Endothelial cell of umbilical vein (primary cell): ENCODE measurements at regions of chr7 and their contacts with region 1.

Region 1: DNA sequence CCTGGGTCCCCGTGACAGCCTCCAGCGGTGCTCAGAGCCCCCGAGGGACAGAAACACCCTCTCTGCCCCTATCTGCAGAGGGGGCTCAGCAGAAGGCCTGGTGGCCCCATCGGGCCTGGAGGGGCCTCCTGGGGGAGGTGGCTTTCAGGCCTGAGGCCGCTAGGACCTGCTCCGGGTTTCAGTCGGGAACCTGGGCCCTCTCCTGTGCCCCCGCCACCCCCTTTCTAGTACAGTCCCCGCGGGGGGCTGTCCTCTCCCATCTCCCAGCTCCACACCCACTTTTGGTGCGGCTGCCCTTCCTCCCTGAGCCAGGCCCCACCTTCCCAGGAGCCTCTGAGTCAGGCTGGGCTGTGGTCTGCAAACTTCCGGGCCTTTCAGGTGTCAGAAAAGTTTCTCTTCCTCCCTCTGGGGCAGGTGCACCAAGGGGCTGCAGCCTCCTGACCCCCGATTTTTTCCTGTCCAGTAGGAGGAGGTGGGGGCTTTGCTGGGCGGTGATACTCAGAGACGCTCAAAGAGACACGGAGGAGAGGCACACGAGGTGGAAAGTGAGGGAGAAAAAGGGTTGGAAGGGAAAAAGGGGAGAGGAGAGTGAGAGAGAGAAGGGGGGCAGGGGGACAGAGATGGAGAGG is 692 bp downstream of the CARD11 start:
- DNase-seq: no peak
- H3K4me3 ChIP-seq: peak overlapping the region; percentile 61 to 71 (median 63)
- H3K27ac ChIP-seq: no peak overlapping the region
- H3K4me1 ChIP-seq: peaks cover 3% of the 10 kb centered on the region
- H3K27me3 ChIP-seq: no peaks in the 10 kb centered on the region
- CTCF ChIP-seq: no peak
- POLR2A ChIP-seq: no peak

Region 2: GRCh38 chr7:2999078-2999500 is 43.9 kb before region 1 on chr7:
- CTCF ChIA-PET with region 1: no interaction called
- POLR2A ChIA-PET with region 1: no interaction called
- dilution Hi-C with region 1: no loop called
- intact Hi-C with region 1: loop called (anchors 1 kb)
- DNase-seq: peak; percentile 75
- H3K4me3 ChIP-seq: no peak overlapping the region
- H3K27ac ChIP-seq: peak overlapping the region; percentile 60
- H3K4me1 ChIP-seq: peaks cover 17% of the 10 kb centered on the region
- H3K27me3 ChIP-seq: no peaks in the 10 kb centered on the region
- CTCF ChIP-seq: no peak
- POLR2A ChIP-seq: no peak

Region 3: GRCh38 chr7:3028071-3028757 is 14.8 kb before region 1 on chr7:
- CTCF ChIA-PET with region 1: interaction called, 5 read pairs
- POLR2A ChIA-PET with region 1: interaction called, 6 read pairs
- dilution Hi-C with region 1: no loop called
- intact Hi-C with region 1: loop called (anchors 2 kb)
- DNase-seq: peak; percentile 90
- H3K4me3 ChIP-seq: peak overlapping the region in 1 of 3 experiments; percentile 1
- H3K27ac ChIP-seq: peak overlapping the region; percentile 80
- H3K4me1 ChIP-seq: peaks cover 22% of the 10 kb centered on the region
- H3K27me3 ChIP-seq: no peaks in the 10 kb centered on the region
- CTCF ChIP-seq: peak in 1 of 2 donors; percentile 5
- POLR2A ChIP-seq: no peak

Region 4: DNA sequence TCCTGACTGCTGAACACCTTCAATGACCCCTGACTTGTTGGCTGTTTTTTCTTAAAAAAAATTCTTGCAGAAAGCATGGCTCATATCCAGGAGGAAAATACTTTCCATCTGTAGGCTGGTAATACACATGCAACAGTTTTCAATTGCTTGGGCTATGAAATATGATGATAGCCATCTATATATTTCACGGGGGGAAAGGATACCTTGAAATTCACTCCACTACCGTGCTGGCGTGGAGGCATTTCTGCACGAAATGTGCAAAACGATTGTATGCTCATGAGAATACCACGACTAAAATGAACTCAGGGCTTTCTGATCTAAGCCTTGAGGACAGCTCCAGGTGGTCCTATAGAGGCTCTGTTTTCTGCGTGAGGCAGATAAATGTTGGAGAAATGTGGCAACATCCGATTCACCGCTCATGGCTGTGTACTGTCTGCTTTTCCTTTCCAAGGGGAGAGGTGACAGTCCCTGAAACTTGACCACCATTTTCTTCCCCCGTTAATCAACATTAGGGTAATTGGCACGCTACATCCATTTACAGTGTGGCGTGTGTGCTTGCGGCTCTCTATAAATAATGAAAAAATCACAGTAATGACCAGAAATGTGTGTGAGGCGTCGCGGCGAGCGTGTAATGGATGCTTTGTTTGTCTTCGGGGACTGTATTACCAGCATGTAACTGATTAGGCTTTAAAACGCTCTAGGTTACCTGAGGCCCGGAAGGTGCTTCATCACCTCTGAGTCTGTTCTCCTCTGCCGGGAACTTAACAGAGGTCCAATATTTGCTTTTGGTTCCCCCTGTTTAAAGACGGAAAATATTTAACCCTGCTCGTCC is 13.5 kb after region 1 on chr7:
- CTCF ChIA-PET with region 1: no interaction called
- POLR2A ChIA-PET with region 1: no interaction called
- dilution Hi-C with region 1: no loop called
- intact Hi-C with region 1: no loop called
- DNase-seq: no peak
- H3K4me3 ChIP-seq: no peak overlapping the region
- H3K27ac ChIP-seq: no peak overlapping the region
- H3K4me1 ChIP-seq: no peaks in the 10 kb centered on the region
- H3K27me3 ChIP-seq: peaks cover 14 to 21% of the 10 kb centered on the region in 2 experiments
- CTCF ChIP-seq: no peak
- POLR2A ChIP-seq: no peak

Region 5: GRCh38 chr7:3575753-3576531 is 533.0 kb after region 1 on chr7:
- CTCF ChIA-PET with region 1: no interaction called
- POLR2A ChIA-PET with region 1: no interaction called
- dilution Hi-C with region 1: no loop called
- intact Hi-C with region 1: no loop called
- DNase-seq: no peak
- H3K4me3 ChIP-seq: no peak overlapping the region
- H3K27ac ChIP-seq: no peak overlapping the region
- H3K4me1 ChIP-seq: no peaks in the 10 kb centered on the region
- H3K27me3 ChIP-seq: no peaks in the 10 kb centered on the region
- CTCF ChIP-seq: no peak
- POLR2A ChIP-seq: no peak